Activated naive CD4-positive, alpha-beta T cell treated with anti-CD3 and anti-CD28 coated beads for 36 hours (primary cell): ENCODE measurements at regions of chr14 and their contacts with region 1.

Region 1: GRCh38 chr14:24232121-24232644 is at the start of gene NEDD8:
- DNase-seq: peak; percentile 96
- H3K4me3 Mint-ChIP-seq: peak within 1 kb of the TSS; percentile 98
- H3K27ac Mint-ChIP-seq: peak within 1 kb of the TSS; percentile 97
- H3K4me1 Mint-ChIP-seq: peaks cover 52% of the 10 kb centered on the region
- H3K27me3 Mint-ChIP-seq: no peaks in the 10 kb centered on the region
- total RNA-seq, gene NEDD8: 172 to 196 TPM

Region 2: GRCh38 chr14:24141097-24141880 is 90.9 kb before region 1 on chr14 and contains the start of gene EMC9:
- CTCF ChIA-PET with region 1: no interaction called
- intact Hi-C with region 1: loop called (anchors 1 kb)
- DNase-seq: peak; percentile 100
- H3K4me3 Mint-ChIP-seq: peak within 1 kb of the TSS; percentile 99
- H3K27ac Mint-ChIP-seq: peak within 1 kb of the TSS; percentile 93
- H3K4me1 Mint-ChIP-seq: peaks cover 73% of the 10 kb centered on the region
- H3K27me3 Mint-ChIP-seq: no peaks in the 10 kb centered on the region
- total RNA-seq, gene EMC9: 38.4 to 38.9 TPM

Region 3: GRCh38 chr14:24188251-24189058 is 43.7 kb before region 1 on chr14 and contains the start of gene IPO4:
- CTCF ChIA-PET with region 1: interaction called, 3 read pairs
- intact Hi-C with region 1: loop called (anchors 1 kb)
- DNase-seq: peak; percentile 97
- H3K4me3 Mint-ChIP-seq: peak within 1 kb of the TSS; percentile 85
- H3K27ac Mint-ChIP-seq: peak within 1 kb of the TSS; percentile 78
- H3K4me1 Mint-ChIP-seq: peaks cover 46% of the 10 kb centered on the region
- H3K27me3 Mint-ChIP-seq: no peaks in the 10 kb centered on the region
- total RNA-seq, gene IPO4: 64.2 to 74.5 TPM

Region 4: DNA sequence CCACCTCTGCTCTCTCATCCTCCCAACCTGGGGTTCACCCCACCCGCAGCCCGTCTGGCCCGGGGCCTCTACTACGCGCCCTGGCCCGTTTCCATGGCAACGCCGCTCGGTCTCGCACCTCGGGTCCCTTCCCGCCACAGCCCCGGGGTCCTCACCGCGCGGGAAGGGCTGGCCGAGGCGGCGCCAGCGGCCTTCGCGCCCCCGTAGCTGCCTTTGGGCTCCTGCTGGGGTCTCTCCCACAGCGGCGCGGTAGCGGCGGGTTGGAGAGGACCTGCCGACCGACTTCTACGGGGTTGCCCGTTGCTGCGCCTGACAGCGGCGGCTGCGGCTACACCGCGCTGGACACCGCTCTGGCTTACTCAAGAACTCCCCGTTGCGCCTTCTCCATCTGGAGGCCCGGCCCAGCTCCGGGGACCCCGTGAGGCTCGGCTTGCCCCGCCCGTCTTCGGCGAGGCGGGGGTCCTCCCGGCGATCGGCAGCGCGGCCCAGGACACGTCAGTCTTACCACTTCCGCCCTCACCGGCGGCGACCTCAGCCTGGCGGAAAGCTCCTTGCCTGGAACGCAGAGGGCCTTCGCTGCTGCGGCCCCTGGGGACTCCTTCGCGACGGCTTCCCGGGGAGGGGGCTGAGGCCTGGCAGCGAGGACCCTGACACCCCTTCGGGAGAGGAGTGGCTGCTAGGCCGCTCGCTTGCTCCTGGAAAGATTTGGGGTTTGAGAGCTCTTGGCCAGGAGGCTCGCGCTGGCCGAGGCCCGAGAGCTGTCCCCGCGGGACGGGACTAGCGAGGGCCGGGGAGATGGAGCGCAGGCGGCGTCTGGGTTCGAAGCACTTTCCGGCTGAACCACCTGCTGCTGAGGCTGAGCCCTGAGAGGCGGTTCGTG is 36.8 kb before region 1 on chr14 and contains the start of gene TM9SF1:
- CTCF ChIA-PET with region 1: interaction called, 3 read pairs
- intact Hi-C with region 1: loop called (anchors 1 kb)
- DNase-seq: peak; percentile 89
- H3K4me3 Mint-ChIP-seq: peak within 1 kb of the TSS; percentile 96
- H3K27ac Mint-ChIP-seq: peak within 1 kb of the TSS; percentile 93
- H3K4me1 Mint-ChIP-seq: peaks cover 56% of the 10 kb centered on the region
- H3K27me3 Mint-ChIP-seq: no peaks in the 10 kb centered on the region
- total RNA-seq, gene TM9SF1: 14.7 to 15.1 TPM

Region 5: GRCh38 chr14:24289649-24290249 is 57.6 kb after region 1 on chr14:
- CTCF ChIA-PET with region 1: no interaction called
- intact Hi-C with region 1: no loop called
- DNase-seq: peak; percentile 93
- H3K4me3 Mint-ChIP-seq: no peak overlapping the region
- H3K27ac Mint-ChIP-seq: peak overlapping the region; percentile 75
- H3K4me1 Mint-ChIP-seq: peaks cover 25% of the 10 kb centered on the region
- H3K27me3 Mint-ChIP-seq: no peaks in the 10 kb centered on the region

Region 6: GRCh38 chr14:24377657-24378056 is 145.5 kb after region 1 on chr14:
- CTCF ChIA-PET with region 1: no interaction called
- intact Hi-C with region 1: no loop called
- DNase-seq: no peak
- H3K4me3 Mint-ChIP-seq: no peak overlapping the region
- H3K27ac Mint-ChIP-seq: no peak overlapping the region
- H3K4me1 Mint-ChIP-seq: peaks cover 4% of the 10 kb centered on the region
- H3K27me3 Mint-ChIP-seq: peaks cover 3% of the 10 kb centered on the region